GM18951 (cell line): ENCODE measurements at regions of chr2 and their contacts with region 1.

Region 1: DNA sequence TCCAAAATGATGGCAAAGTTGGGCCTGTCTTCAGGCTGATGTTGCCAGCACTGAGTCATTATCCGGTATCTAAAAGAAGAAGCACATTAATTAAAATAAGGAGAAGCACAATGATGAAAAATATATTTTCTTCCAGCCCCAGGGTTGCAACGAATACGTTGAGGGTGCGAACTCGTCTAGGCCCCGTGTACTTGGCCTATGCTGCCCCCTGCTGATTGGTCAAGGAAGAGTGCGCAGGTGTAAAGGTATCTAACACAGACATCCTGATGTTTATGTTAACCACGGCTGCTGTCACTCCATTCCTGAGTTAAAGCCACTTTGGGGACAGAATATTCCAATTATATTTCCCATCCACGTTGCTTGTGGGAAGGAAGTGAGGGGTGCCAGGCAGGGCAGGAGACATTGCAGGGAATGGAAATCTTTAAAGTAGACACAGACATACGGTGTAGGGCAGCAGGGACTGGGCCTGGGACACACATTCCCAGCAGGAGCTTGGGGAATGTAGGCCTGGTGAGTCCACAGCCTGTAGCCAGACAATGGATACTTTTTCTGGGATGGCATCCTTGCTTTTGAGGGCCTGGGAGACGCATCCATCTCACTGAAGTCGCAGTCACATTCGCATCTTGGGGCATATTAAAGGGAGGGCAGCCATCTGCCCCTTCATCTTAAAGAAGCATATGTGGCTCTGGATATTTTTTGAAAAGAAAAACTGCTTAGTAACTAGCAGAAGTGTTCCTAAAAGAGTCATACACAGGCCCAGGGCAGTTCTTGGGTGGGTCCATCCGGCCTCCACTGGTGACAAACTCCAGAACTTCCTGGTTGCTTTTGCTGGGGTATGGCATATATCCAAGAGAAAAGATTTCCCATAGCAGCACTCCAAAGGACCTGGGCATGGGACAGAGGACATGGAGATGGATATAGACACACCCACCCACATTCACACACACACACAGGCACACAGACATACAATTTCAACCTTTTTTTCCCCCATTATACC is 81.9 kb downstream of the CLIP4 start:
- POLR2A ChIP-seq: no peak

Region 2: GRCh38 chr2:28960401-28960800 is 236.7 kb before region 1 on chr2:
- in situ Hi-C with region 1: loop called (anchors 5 kb)
- POLR2A ChIP-seq: no peak

Region 3: DNA sequence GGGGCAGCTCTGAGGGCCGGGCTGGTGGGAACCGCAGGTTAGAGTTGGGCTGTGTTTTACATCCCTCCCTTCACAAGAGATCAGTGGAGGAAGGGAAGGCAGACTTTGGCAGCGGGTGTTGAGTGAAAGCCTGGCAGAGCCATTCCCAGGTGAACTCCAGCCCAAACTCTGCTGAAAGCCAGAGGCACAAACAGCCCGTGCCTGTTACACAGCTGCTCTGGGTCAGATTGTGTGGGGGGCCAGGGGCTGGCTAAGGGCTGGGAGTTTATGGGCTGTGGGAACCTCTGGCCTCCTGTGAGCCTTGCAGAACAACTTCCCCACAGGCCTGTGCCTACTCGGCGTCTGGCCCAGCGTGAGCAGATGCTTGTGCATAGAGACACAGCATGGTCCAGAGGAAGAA is 204.9 kb after region 1 on chr2:
- in situ Hi-C with region 1: no loop called
- POLR2A ChIP-seq: no peak

Region 4: GRCh38 chr2:29583544-29584156 is 386.6 kb after region 1 on chr2:
- in situ Hi-C with region 1: no loop called
- POLR2A ChIP-seq: no peak